ENCODE measurements at regions of chr3 and their contacts with region 1.

Region 1: GRCh38 chr3:94062431-94063404 is at the starts of genes DHFR2 and NSUN3:
- DNase-seq: peak; percentile 63 to 95 (median 82)
- ATAC-seq: peak; percentile 85
- H3K4me3 ChIP-seq: peak within 1 kb of the TSS; percentile 76 to 82
- H3K4me3 Mint-ChIP-seq: peak within 1 kb of the TSS; percentile 99
- H3K27ac ChIP-seq: peak within 1 kb of the TSS; percentile 89 to 97
- H3K27ac Mint-ChIP-seq: peak within 1 kb of the TSS; percentile 100
- H3K4me1 ChIP-seq: peaks cover 23% of the 10 kb centered on the region
- H3K4me1 Mint-ChIP-seq: peaks cover 64% of the 10 kb centered on the region
- H3K27me3 ChIP-seq: no peaks in the 10 kb centered on the region
- H3K27me3 Mint-ChIP-seq: no peaks in the 10 kb centered on the region
- CTCF ChIP-seq: no peak
- total RNA-seq, gene DHFR2: 0.65 to 1.4 TPM
- total RNA-seq, gene NSUN3: 12.3 to 15.9 TPM

Region 2: GRCh38 chr3:93979833-93980676 is 82.7 kb before region 1 on chr3 and contains the start of gene ARL13B:
- CTCF ChIA-PET with region 1: no interaction called
- POLR2A ChIA-PET with region 1: interaction called, 6 read pairs
- intact Hi-C with region 1: loop called (anchors 1 kb)
- DNase-seq: peak; percentile 85 to 98 (median 92)
- ATAC-seq: peak; percentile 100
- H3K4me3 ChIP-seq: peak within 1 kb of the TSS; percentile 86
- H3K4me3 Mint-ChIP-seq: peak within 1 kb of the TSS; percentile 91
- H3K27ac ChIP-seq: peak within 1 kb of the TSS; percentile 83 to 94
- H3K27ac Mint-ChIP-seq: peak within 1 kb of the TSS; percentile 93
- H3K4me1 ChIP-seq: peaks cover 5% of the 10 kb centered on the region
- H3K4me1 Mint-ChIP-seq: peaks cover 25% of the 10 kb centered on the region
- H3K27me3 ChIP-seq: no peaks in the 10 kb centered on the region
- H3K27me3 Mint-ChIP-seq: no peaks in the 10 kb centered on the region
- CTCF ChIP-seq: no peak
- total RNA-seq, gene ARL13B: 5.3 to 6.5 TPM

Region 3: DNA sequence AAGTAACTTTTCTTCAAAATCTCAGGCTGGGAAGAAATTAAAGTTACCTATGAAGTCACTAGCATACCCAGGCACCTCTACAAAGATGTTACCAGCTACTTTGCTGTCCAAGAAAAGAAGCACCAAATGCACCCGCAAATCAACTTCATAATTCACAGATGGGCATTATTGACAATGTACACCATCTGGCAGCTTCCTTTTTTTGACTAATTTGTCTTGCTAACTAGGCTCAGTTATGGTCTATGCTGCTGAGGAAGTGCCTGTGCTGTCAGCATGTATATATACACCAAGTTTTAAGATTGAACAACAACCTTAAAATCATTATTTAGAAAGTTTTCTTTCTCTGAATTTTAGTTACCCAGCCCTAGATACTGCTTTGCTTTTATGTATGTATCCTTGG is 93.9 kb after region 1 on chr3:
- CTCF ChIA-PET with region 1: no interaction called
- POLR2A ChIA-PET with region 1: no interaction called
- intact Hi-C with region 1: no loop called
- DNase-seq: no peak
- ATAC-seq: no peak
- H3K4me3 ChIP-seq: no peak overlapping the region
- H3K4me3 Mint-ChIP-seq: no peak overlapping the region
- H3K27ac ChIP-seq: no peak overlapping the region
- H3K27ac Mint-ChIP-seq: no peak overlapping the region
- H3K4me1 ChIP-seq: no peaks in the 10 kb centered on the region
- H3K4me1 Mint-ChIP-seq: no peaks in the 10 kb centered on the region
- H3K27me3 ChIP-seq: no peaks in the 10 kb centered on the region
- H3K27me3 Mint-ChIP-seq: peaks cover 6% of the 10 kb centered on the region
- CTCF ChIP-seq: no peak